IMR-90 (cell line): ENCODE measurements at regions of chr4 and their contacts with region 1.

Region 1: DNA sequence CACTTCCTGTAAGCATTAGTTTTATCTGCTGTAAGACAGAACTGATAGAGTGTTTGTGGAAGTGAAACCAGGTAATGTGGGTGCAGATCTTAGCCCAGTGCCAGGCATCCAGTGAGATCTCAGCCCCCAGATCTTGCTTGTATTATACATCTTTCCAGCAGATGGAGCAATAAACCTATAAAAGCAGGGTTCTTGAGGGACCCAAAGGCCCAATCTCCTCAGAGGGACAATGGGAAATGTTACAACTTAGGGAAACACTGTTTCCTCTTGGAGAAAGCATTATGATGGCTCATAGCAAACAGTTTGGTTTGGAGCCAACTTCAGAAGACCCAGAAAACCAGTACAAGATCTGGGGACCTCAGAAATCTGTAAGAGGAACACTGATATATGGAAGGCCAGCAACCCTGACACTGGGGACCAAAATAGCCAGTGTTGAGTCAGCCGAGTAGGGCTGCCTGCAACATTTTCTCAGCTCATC is 206.3 kb downstream of the SLC7A11 start:
- DNase-seq: peak; percentile 81
- ATAC-seq: peak; percentile 83
- H3K4me3 ChIP-seq: no peak overlapping the region
- H3K27ac ChIP-seq: peak overlapping the region; percentile 64
- H3K4me1 ChIP-seq: peaks cover 22% of the 10 kb centered on the region
- H3K27me3 ChIP-seq: no peaks in the 10 kb centered on the region
- CTCF ChIP-seq: peak; percentile 81
- POLR2A ChIP-seq: no peak
- RAD21 ChIP-seq: peak; percentile 89

Region 2: DNA sequence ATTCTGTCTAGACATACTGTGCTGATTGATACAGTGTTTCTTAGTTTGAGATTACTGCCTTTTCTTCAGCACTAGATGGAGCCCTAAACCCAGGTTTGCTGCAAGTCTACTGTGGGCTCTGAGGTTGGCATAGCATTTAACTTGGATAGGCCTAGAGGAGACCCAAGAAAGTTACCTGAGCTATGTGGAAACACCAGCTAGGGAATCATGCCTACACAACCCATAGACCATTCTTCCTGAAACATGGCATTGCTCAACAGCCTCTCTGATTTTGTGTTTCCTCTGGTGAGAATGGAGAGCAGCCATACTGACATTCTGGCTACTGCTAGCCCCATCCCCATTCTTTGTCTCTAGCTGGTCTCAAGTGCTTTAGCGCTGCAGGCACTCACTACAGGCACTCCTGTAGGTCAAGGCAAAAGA is 215.8 kb before region 1 on chr4:
- CTCF ChIA-PET with region 1: no interaction called
- POLR2A ChIA-PET with region 1: no interaction called
- dilution Hi-C with region 1: no loop called
- in situ Hi-C with region 1: no loop called
- intact Hi-C with region 1: loop called (anchors 1 kb)
- DNase-seq: peak; percentile 65
- ATAC-seq: peak; percentile 91
- H3K4me3 ChIP-seq: no peak overlapping the region
- H3K27ac ChIP-seq: no peak overlapping the region
- H3K4me1 ChIP-seq: no peaks in the 10 kb centered on the region
- H3K27me3 ChIP-seq: no peaks in the 10 kb centered on the region
- CTCF ChIP-seq: peak; percentile 74
- POLR2A ChIP-seq: no peak
- RAD21 ChIP-seq: peak; percentile 88

Region 3: DNA sequence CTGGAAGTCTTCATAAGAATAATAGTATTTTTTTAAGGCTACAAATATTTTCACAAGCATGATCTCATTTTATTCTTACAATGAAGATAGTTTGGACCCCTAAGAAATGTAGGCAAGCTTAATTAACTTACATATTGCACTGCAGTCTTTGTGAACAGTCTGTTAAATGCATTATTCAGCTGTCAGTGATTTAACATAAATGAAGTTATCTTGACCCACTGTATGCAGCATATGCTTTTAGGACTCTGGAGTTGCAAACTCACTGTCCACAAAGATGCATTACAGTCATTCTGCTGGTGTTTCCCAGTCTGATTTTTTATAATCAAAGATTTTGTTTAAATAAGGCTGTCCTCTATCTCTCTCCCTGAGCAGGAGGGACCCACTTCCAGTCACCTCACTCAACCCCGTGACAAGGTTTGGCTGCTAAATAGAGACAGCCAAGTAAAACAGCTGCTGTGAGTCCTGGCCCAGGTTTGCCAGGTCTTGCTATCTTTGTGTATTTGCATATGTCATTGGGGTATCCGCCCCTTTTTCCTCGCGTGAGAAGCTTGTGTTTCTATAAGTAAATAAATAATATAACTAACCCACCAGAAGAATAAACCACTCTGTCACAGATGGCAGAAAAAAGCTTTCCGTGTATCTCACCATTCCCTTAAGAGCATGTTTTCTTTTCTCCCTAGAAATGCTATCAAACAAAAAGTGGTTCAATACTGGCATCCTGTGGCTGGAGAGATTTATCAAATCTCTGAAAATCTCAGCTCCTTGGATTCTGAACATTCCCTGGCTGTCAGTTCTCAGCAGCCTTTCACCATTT is 139.4 kb after region 1 on chr4:
- CTCF ChIA-PET with region 1: interaction called, 7 read pairs
- POLR2A ChIA-PET with region 1: no interaction called
- dilution Hi-C with region 1: no loop called
- in situ Hi-C with region 1: loop called (anchors 10 kb)
- intact Hi-C with region 1: no loop called
- DNase-seq: peak; percentile 61
- ATAC-seq: peak; percentile 67
- H3K4me3 ChIP-seq: no peak overlapping the region
- H3K27ac ChIP-seq: peak overlapping the region; percentile 2; the same call in 1 of the 2 replicates
- H3K4me1 ChIP-seq: peaks cover 3% of the 10 kb centered on the region
- H3K27me3 ChIP-seq: no peaks in the 10 kb centered on the region
- CTCF ChIP-seq: peak; percentile 40
- POLR2A ChIP-seq: no peak
- RAD21 ChIP-seq: peak; percentile 36

Region 4: GRCh38 chr4:138494931-138495330 is 459.1 kb after region 1 on chr4:
- CTCF ChIA-PET with region 1: no interaction called
- POLR2A ChIA-PET with region 1: no interaction called
- dilution Hi-C with region 1: no loop called
- in situ Hi-C with region 1: no loop called
- intact Hi-C with region 1: loop called (anchors 2 kb)
- DNase-seq: peak; percentile 46
- ATAC-seq: peak; percentile 97
- H3K4me3 ChIP-seq: no peak overlapping the region
- H3K27ac ChIP-seq: no peak overlapping the region
- H3K4me1 ChIP-seq: no peaks in the 10 kb centered on the region
- H3K27me3 ChIP-seq: no peaks in the 10 kb centered on the region
- CTCF ChIP-seq: peak; percentile 44
- POLR2A ChIP-seq: no peak
- RAD21 ChIP-seq: peak; percentile 52

Region 5: DNA sequence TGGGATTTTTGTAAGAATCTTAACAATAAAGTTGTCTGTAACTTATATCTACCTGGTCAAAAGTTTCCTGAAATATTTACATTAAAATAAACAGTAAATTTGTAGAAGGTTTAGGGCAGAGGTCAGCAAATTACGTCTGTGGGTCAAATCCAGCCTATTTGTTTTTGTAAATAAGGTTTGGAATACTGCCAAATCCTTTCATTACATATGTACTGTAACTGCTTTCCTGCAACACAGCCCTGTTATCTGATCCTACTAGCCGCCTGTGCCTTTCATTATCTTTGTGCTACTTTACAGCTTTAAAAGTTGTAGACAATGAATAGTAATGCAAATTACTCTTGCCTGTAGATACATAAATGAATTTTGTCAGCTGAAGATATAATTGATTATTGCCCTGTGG is 575.9 kb after region 1 on chr4:
- CTCF ChIA-PET with region 1: interaction called, 10 read pairs
- POLR2A ChIA-PET with region 1: no interaction called
- dilution Hi-C with region 1: no loop called
- in situ Hi-C with region 1: no loop called
- intact Hi-C with region 1: no loop called
- DNase-seq: no peak
- ATAC-seq: no peak
- H3K4me3 ChIP-seq: no peak overlapping the region
- H3K27ac ChIP-seq: no peak overlapping the region
- H3K4me1 ChIP-seq: peaks cover 6% of the 10 kb centered on the region; the same call in 1 of the 2 replicates
- H3K27me3 ChIP-seq: no peaks in the 10 kb centered on the region
- CTCF ChIP-seq: no peak
- POLR2A ChIP-seq: no peak
- RAD21 ChIP-seq: no peak